Astrocyte of the cerebellum (primary cell): ENCODE measurements at regions of chr4 and their contacts with region 1.

Region 1: DNA sequence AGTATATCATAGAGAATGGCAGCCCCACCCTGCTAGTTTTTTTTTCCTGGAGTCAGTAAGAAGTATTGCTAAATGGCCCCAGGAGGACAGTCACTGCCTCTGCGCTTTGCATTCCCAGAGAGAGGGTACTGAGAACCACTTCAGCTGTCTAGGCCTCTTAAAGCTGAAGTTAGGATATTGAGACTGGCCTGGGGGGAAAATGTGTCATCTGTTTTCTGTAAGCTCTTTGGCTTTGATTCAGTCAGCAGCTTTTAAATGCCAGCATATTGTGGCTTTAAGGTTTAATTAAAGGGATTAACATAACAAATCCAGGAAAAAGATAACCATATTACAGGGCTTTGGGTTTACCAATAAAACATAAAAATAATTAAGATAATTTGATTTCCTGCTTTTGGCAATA is 852.0 kb downstream of the PCDH18 start:
- DNase-seq: no peak
- H3K4me3 ChIP-seq: no peak overlapping the region
- CTCF ChIP-seq: no peak

Region 2: DNA sequence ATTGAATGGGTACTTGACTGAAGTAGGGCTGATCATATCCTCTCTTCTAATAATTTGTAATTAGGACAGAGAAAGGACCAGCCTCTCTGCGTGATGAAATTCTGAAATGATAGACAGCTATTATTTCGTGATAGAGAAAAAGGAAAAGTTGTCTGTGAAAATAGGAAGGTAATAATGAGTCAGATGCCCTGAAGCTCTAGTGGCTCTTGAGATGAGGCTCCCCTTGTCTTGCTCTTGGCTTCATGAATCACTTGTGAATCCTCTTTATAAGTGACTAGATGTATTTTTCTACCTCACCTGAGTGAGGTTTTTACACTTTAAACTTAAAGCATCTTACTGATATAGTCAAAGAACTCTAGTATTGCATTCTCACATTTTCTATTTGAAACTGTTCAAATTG is 36.9 kb before region 1 on chr4:
- in situ Hi-C with region 1: loop called (anchors 5 kb)
- DNase-seq: no peak
- H3K4me3 ChIP-seq: no peak overlapping the region
- CTCF ChIP-seq: no peak